Mammary epithelial cell (primary cell): ENCODE measurements at regions of chr7 and their contacts with region 1.

Region 1: DNA sequence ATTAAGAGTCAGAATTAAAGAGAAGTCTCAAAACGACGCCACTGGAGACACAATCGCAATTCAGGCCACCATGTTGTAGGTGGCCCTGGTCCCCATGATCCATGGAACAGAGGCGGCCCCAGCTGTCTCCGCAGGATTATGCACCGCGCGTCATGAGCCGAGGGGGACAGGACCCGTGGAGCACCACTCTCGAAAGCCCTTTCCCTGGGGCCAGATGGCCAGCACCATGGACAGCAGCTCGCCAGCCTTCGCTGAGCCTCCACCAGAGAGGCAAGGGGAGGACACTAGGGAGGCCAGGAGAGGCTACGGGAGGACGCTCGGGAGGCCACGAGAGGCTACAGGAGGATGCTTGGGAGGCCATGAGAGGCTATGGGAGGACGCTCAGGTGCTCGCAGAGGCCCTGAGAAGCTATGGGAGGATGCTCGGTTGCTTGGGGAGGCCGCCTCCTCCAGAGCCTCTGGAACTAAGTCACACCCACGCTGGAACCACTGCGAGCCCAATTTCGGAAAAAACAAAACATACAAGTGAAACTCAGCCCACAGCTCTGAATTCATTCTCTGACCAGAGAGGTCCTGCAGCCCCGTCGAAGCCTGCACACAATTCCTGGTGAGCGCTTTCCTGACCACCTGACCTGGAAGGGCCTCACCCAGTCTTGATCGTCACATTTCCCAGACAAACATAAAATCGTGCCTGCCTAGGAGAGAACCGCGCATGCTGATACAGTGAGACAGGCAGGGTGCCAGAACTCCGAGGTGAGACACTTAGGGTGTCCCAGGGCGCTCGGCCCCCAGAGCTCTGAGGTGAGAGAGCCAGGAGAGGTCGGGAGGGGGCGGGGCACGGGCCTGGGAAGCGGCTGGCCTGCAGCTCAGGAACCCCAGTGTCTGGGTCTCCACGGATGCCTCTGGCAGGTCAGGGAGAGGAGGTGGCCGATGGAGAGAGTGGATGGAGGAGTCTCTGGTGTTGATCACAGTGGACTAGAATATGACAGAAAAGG is 224.4 kb downstream of the PTPRN2 start:
- DNase-seq: no peak
- H3K4me3 ChIP-seq: no peak overlapping the region
- H3K27ac ChIP-seq: no peak overlapping the region
- H3K4me1 ChIP-seq: no peaks in the 10 kb centered on the region
- H3K27me3 ChIP-seq: no peaks in the 10 kb centered on the region
- CTCF ChIP-seq: no peak

Region 2: DNA sequence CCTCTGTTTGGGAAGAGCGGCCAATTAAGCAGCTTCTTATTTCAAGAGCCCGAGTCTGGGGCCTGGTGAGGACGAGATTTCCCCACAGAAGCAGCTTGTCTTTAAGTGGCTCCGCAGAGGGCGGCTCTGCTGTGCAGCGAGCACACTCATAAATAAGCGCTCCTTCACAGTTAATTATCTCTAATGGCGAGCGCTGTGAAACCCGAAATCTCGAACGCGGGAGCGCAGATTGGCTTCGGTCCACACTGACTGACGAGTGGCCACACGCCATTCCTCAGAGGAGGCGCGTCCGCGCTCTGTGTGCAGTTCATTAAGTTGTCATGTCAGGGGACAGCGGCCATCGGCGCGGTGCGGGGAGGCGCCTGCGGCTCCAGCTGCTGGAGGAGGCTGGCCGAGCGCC is 465.5 kb before region 1 on chr7:
- CTCF ChIA-PET with region 1: no interaction called
- dilution Hi-C with region 1: no loop called
- in situ Hi-C with region 1: no loop called
- intact Hi-C with region 1: no loop called
- DNase-seq: no peak
- H3K4me3 ChIP-seq: no peak overlapping the region
- H3K27ac ChIP-seq: no peak overlapping the region
- H3K4me1 ChIP-seq: no peaks in the 10 kb centered on the region
- H3K27me3 ChIP-seq: no peaks in the 10 kb centered on the region
- CTCF ChIP-seq: no peak

Region 3: DNA sequence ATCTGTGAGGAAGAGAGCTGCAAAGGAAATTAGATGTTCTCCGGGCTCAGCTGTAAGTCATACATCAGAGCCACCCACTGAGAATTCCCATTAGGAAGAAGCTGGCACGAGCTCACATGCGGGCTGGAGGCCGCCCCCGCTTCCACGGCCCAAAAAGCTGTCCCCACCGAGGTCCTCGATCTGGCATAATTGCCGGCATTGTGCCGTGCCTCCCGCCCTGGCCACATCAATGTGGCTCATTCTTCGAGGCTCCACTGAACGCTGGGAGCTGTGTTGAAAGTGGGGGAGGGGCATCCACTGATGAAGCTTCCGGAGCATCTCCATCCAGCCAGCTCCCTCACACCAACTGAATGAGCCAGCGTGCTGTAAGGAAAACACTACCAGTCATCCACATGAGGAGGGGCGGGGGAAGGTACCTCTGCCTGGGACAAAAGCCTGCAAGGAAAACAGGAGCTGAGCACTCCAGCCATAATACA is 51.3 kb after region 1 on chr7:
- CTCF ChIA-PET with region 1: no interaction called
- dilution Hi-C with region 1: loop called (anchors 10 kb)
- in situ Hi-C with region 1: no loop called
- intact Hi-C with region 1: no loop called
- DNase-seq: no peak
- H3K4me3 ChIP-seq: no peak overlapping the region
- H3K27ac ChIP-seq: no peak overlapping the region
- H3K4me1 ChIP-seq: no peaks in the 10 kb centered on the region
- H3K27me3 ChIP-seq: no peaks in the 10 kb centered on the region
- CTCF ChIP-seq: no peak

Region 4: DNA sequence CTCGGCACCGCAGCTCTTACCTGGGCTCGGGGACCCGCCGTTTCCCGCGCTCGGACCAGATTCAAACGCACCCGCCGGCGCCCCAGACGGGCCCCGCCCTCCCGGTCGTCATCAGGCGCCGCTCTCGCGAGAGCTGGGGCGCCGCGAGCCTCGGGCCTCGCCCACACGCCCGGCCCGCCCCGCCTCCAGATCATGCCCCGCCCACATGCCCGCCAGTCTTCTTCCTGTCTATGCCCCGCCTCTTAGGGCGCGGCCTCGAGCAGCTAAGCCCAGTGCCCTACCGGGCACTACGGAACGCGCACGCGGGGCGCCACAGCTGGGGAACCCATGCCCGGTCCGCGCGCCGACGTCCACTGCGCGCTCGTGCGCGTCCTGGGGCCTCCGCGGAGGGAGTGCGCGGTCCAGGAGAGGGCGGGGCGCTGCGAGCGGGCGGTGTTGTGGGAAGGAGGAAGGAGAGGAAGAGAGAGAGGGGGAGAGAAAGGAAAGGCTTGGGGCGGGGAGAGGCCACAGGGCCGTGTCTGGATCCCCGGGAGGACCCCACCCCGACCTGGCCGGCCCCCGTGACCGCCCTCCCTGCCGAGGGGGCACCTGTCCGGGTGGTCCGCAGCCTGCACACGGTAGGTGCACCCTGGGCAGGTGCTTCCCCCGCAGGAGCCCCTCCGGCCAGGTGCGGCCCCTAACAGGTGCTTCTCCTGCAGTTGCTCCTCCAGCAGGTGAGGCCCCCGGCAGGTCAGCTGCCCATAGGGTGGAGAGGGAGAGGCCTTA is 341.7 kb after region 1 on chr7 and contains the start of gene NCAPG2:
- CTCF ChIA-PET with region 1: interaction called, 12 read pairs
- dilution Hi-C with region 1: no loop called
- in situ Hi-C with region 1: no loop called
- intact Hi-C with region 1: no loop called
- DNase-seq: peak; percentile 98
- H3K4me3 ChIP-seq: peak within 1 kb of the TSS; percentile 80 to 100 (median 90)
- H3K27ac ChIP-seq: peak within 1 kb of the TSS; percentile 85
- H3K4me1 ChIP-seq: peaks cover 16% of the 10 kb centered on the region
- H3K27me3 ChIP-seq: no peaks in the 10 kb centered on the region
- CTCF ChIP-seq: peak in 1 of 2 donors; percentile 36
- total RNA-seq, gene NCAPG2: 3.2 to 42.0 TPM